GM18951 (cell line): ENCODE measurements at regions of chr5 and their contacts with region 1.

Region 1: GRCh38 chr5:81751009-81751835 is at the start of gene SSBP2:
- POLR2A ChIP-seq: peak; percentile 62

Region 2: DNA sequence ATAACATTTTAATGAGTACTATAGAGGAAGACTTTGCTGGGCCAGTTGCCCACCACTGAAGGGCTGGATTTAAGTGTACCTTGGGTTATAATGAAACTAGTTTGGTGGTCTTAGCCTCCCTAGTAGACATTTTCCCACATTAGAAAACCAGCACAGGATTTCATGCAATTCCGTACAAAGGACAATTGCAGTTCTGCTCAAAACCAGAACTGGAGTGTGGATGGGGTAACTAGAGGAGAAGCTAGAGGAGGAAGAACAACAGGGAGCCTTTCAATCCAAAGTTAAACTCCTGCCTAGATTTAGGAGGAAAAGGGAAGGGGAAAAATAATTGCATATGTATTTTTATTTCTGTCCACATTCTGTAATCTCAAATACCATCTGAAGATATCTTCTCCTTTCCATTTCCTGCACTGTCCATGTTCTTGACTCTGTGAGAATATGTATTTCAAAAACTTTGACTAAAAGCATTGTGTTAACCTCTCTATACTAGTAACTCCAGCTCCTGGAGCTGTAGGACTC is 97.2 kb after region 1 on chr5:
- in situ Hi-C with region 1: loop called (anchors 10 kb)
- POLR2A ChIP-seq: no peak